ENCODE measurements at regions of chr1 and their contacts with region 1.

Region 1: GRCh38 chr1:2233997-2234761 is 6.1 kb downstream of the SKI start:
- DNase-seq: peak; percentile 80 to 93 (median 87)
- H3K4me3 ChIP-seq: peak overlapping the region; percentile 25
- H3K27ac ChIP-seq: peak overlapping the region; percentile 68 to 73
- H3K4me1 ChIP-seq: peaks cover 48% of the 10 kb centered on the region
- H3K27me3 ChIP-seq: no peaks in the 10 kb centered on the region
- CTCF ChIP-seq: no peak
- EP300 ChIP-seq: no peak
- POLR2A ChIP-seq: no peak

Region 2: GRCh38 chr1:2170211-2170610 is 64.0 kb before region 1 on chr1:
- intact Hi-C with region 1: no loop called
- DNase-seq: no peak
- H3K4me3 ChIP-seq: no peak overlapping the region
- H3K27ac ChIP-seq: no peak overlapping the region
- H3K4me1 ChIP-seq: peaks cover 4% of the 10 kb centered on the region
- H3K27me3 ChIP-seq: no peaks in the 10 kb centered on the region
- CTCF ChIP-seq: no peak
- EP300 ChIP-seq: no peak
- POLR2A ChIP-seq: no peak

Region 3: DNA sequence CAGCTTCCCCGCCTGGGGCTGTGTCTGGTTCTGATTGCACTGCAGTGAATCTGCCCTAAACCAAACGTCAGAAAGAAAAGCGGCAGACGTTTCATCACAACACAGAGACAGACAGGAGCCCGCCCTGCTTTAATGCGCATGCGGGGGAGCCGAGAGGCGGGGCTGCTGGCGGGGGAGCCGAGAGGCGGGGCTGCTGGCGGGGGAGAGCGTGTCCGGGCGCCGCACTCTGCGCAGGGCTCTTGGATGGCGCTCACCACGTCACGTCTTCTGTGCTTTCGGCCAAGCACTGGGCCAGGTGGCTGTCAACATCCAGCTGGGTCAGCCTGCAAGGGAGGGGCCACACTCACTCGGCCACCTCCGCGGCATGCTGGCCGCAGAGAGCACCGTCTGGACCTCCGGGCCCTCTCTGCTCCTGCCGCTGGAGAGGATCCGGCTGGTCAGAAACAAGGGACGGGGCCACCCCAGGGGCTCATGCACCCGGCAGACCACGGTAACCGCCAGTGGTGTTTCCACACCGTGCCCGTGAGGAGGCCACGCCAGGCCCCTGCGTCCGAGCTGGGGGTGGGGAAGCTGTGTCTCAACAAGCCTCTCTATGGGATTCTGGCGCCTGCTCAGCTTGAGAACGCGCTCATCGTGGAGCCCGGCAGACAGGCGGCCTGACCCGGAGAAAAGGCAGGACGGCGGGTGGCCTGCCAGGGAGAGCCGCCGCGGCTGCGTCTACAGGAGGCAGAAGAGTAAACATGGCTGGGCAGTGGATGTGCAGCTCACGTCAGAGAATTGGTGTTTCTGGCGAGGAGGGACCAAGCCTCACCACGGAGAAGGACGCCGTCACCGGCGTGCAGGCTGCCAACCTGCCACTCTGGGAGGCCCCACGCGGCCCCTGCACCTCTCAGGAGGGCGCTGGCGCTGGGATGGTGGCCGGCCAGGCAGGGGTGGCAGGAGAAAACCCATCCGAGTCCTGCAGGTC is 44.4 kb before region 1 on chr1:
- intact Hi-C with region 1: loop called in 2 of 4 experiments (anchors 2 to 5 kb)
- DNase-seq: peak; percentile 89 to 96 (median 96)
- H3K4me3 ChIP-seq: peak overlapping the region; percentile 58
- H3K27ac ChIP-seq: peak overlapping the region; percentile 79 to 93
- H3K4me1 ChIP-seq: peaks cover 25% of the 10 kb centered on the region
- H3K27me3 ChIP-seq: no peaks in the 10 kb centered on the region
- CTCF ChIP-seq: peak in 1 of 3 donors; percentile 16
- EP300 ChIP-seq: peak; percentile 33
- POLR2A ChIP-seq: peak; percentile 83

Region 4: GRCh38 chr1:2194898-2195673 is 39.1 kb before region 1 on chr1:
- intact Hi-C with region 1: loop called in 3 of 4 experiments (anchors 2 to 5 kb)
- DNase-seq: peak; percentile 89 to 92 (median 91)
- H3K4me3 ChIP-seq: peak overlapping the region; percentile 72
- H3K27ac ChIP-seq: peak overlapping the region; percentile 93 to 97
- H3K4me1 ChIP-seq: peaks cover 27% of the 10 kb centered on the region
- H3K27me3 ChIP-seq: no peaks in the 10 kb centered on the region
- CTCF ChIP-seq: peak; percentile 89 to 99 (median 93)
- EP300 ChIP-seq: no peak
- POLR2A ChIP-seq: peak; percentile 10

Region 5: GRCh38 chr1:2212542-2213491 is 21.4 kb before region 1 on chr1:
- intact Hi-C with region 1: loop called in 1 of 4 experiments (anchors 2 kb)
- DNase-seq: peak; percentile 94 to 98 (median 96)
- H3K4me3 ChIP-seq: peak overlapping the region; percentile 36
- H3K27ac ChIP-seq: peak overlapping the region; percentile 96 to 99
- H3K4me1 ChIP-seq: peaks cover 33% of the 10 kb centered on the region
- H3K27me3 ChIP-seq: no peaks in the 10 kb centered on the region
- CTCF ChIP-seq: peak; percentile 6 to 59 (median 43)
- EP300 ChIP-seq: peak; percentile 90
- POLR2A ChIP-seq: peak; percentile 60

Region 6: DNA sequence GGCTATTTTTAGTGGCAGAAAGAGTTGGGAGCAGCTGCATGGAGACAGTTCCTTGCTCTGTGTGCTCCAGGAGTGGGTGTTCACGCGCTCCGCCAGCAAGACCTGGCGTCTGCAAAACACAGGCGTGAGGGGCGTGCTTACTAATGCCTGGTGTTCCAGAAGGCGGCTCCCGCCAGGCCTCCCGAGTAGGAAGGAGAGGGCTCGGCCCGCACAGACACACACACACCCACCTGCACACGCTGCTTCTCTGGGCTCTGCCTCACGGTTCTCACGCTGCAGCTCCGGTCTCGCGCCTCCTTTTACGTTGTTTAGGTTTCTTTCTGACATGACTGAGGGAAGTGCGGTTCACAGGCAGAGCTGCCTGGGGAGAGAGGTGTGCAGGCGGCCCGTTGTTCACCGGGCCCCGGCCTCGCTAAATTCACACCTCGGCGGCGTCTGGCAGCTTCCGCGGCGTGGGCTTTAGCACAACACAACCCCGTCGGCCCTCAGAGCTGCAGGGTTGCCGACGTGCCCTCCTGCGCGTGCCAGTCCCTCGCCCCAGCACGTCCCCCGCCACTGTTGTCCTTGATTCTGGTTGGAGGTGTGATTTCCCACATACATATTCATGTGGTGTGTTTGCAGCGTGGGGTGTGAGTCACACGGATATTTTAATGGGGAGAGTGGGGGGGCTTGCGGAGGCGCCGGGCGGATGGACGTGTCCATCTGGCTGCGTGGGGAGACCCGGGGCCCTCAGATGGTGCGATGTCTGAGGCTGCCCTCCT is 70.9 kb after region 1 on chr1:
- intact Hi-C with region 1: loop called (anchors 5 kb)
- DNase-seq: no peak
- H3K4me3 ChIP-seq: no peak overlapping the region
- H3K27ac ChIP-seq: no peak overlapping the region
- H3K4me1 ChIP-seq: peaks cover 8% of the 10 kb centered on the region
- H3K27me3 ChIP-seq: no peaks in the 10 kb centered on the region
- CTCF ChIP-seq: no peak
- EP300 ChIP-seq: no peak
- POLR2A ChIP-seq: no peak

Region 7: GRCh38 chr1:2314803-2315673 is 80.9 kb after region 1 on chr1:
- intact Hi-C with region 1: loop called in 3 of 4 experiments (anchors 5 kb)
- DNase-seq: peak; percentile 75 to 84 (median 83)
- H3K4me3 ChIP-seq: peak overlapping the region; percentile 54
- H3K27ac ChIP-seq: peak overlapping the region; percentile 61 to 75
- H3K4me1 ChIP-seq: peaks cover 25% of the 10 kb centered on the region
- H3K27me3 ChIP-seq: no peaks in the 10 kb centered on the region
- CTCF ChIP-seq: peak; percentile 68 to 95 (median 80)
- EP300 ChIP-seq: no peak
- POLR2A ChIP-seq: no peak

Region 8: GRCh38 chr1:2330511-2331199 is 96.5 kb after region 1 on chr1:
- intact Hi-C with region 1: no loop called
- DNase-seq: peak; percentile 69 to 88 (median 75)
- H3K4me3 ChIP-seq: no peak overlapping the region
- H3K27ac ChIP-seq: peak overlapping the region; percentile 48 to 52
- H3K4me1 ChIP-seq: peaks cover 11% of the 10 kb centered on the region
- H3K27me3 ChIP-seq: no peaks in the 10 kb centered on the region
- CTCF ChIP-seq: no peak
- EP300 ChIP-seq: no peak
- POLR2A ChIP-seq: no peak

Region 9: GRCh38 chr1:2594001-2594640 is 359.9 kb after region 1 on chr1:
- intact Hi-C with region 1: no loop called
- DNase-seq: peak; percentile 48 to 80 (median 58)
- H3K4me3 ChIP-seq: peak overlapping the region; percentile 20
- H3K27ac ChIP-seq: no peak overlapping the region
- H3K4me1 ChIP-seq: peaks cover 3% of the 10 kb centered on the region
- H3K27me3 ChIP-seq: no peaks in the 10 kb centered on the region
- CTCF ChIP-seq: no peak
- EP300 ChIP-seq: no peak
- POLR2A ChIP-seq: no peak